GM10248 (cell line): ENCODE measurements at regions of chr1 and their contacts with region 1.

Region 1: DNA sequence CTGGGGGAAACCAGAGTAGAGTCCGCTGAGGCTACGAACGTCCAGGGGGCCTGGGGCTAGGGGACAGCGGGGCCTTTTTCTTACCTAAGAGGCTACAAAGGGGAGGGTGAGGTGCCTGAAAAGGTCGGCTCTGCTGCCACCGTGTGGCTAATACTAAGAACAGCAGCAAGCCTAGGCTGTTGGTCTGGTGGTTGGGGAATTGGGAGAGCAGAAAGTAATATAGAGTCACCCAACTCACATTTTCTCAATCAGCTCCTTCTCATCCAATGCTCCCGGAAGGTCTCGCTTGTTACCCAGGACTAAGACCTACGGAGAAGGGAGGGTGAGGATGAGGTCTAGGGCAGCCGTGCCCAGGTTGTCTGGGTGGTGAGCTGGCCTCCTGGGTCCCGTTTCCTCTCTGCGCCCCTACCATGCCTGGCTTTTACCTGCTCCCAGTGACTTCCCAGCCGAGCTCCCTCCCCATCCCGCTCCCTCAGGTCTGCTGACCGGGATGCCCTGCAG is 9.3 kb downstream of the ARL8A start:
- DNase-seq: peak; percentile 89
- CTCF ChIP-seq: peak; percentile 90

Region 2: GRCh38 chr1:201999625-202000238 is 135.5 kb before region 1 on chr1:
- CTCF ChIA-PET with region 1: interaction called, 47 read pairs
- POLR2A ChIA-PET with region 1: no interaction called
- DNase-seq: peak; percentile 67
- CTCF ChIP-seq: peak; percentile 65

Region 3: DNA sequence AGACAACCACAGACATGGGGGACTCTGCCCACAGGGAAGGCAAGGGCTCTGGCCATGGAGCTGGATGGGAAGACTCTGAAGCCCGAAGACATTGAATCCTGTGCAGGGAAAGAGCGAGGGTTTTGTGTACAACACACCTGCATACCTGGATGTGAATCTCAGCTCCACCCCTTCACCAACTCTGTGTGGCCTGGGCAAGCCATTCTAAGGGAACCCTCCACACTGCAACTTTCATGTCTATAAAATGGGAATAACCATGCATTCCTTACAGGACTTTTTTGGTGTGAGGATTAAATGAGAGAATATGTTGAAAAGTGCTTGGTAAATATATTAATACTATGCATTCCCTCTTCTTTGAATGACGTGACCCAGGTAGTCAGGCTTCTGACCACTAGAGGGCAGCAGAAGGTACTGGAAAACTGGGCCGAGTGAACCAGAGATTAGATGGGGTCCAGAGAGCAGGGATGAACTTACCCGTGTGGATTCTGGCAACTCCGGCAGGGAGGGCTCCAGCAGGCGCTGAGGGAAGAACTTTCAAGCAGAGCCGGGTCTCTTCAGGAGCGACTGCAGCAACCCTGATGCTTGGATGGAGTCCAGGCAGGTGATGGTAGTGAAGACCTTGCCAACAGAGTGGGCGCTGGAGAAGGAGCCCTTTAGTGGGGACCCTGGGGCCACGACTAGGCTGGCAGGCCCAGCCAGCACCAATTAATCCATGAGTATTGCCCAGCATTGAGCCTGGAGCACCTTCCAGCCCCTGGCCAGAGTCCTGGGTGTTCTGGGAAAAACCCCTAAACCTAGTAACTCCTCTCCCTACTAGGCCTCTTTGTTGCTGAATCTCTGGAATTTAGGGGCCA is 125.7 kb before region 1 on chr1:
- CTCF ChIA-PET with region 1: interaction called, 67 read pairs
- POLR2A ChIA-PET with region 1: no interaction called
- DNase-seq: peak; percentile 80
- CTCF ChIP-seq: peak; percentile 91

Region 4: DNA sequence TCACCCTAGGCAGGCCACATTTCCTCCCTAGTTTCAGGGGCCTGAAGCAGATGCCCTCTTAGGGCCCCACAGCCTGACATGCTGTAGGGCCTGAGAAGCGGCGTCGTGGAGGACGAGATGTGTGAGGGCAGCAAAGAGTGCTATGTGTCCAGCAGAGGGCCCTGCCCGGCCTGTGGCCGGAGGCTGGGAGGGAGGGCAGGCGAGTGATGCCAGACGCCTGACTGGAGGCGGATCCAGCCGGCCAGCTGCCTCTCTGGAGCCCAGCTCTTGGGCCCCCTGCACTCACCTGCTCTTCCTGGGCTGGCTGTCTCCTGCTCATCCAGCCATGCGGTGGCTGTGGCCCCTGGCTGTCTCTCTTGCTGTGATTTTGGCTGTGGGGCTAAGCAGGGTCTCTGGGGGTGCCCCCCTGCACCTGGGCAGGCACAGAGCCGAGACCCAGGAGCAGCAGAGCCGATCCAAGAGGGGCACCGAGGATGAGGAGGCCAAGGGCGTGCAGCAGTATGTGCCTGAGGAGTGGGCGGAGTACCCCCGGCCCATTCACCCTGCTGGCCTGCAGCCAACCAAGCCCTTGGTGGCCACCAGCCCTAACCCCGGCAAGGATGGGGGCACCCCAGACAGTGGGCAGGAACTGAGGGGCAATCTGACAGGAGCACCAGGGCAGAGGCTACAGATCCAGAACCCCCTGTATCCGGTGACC is 12.5 kb before region 1 on chr1 and contains the start of gene GPR37L1:
- CTCF ChIA-PET with region 1: interaction called, 99 read pairs
- POLR2A ChIA-PET with region 1: no interaction called
- DNase-seq: no peak
- CTCF ChIP-seq: no peak

Region 5: GRCh38 chr1:202154766-202155477 is 19.7 kb after region 1 on chr1:
- CTCF ChIA-PET with region 1: interaction called, 15 read pairs
- POLR2A ChIA-PET with region 1: no interaction called
- DNase-seq: peak; percentile 53
- CTCF ChIP-seq: peak; percentile 65

Region 6: GRCh38 chr1:202160377-202160940 is 25.2 kb after region 1 on chr1 and contains the start of gene PTPN7:
- CTCF ChIA-PET with region 1: interaction called, 15 read pairs
- POLR2A ChIA-PET with region 1: interaction called, 3 read pairs
- DNase-seq: peak; percentile 82
- CTCF ChIP-seq: peak; percentile 73